Stomach (tissue), 19 donors: ENCODE measurements at regions of chr6 and their contacts with region 1.

Region 1: GRCh38 chr6:159789377-159790148 is at the start of gene TCP1:
- DNase-seq: peak; percentile 100
- H3K4me3 ChIP-seq: peak within 1 kb of the TSS; percentile 89 to 93 (median 93)
- H3K27ac ChIP-seq: peak within 1 kb of the TSS; percentile 96 to 99 (median 98)
- H3K4me1 ChIP-seq: peaks cover 37 to 71% (median 59%) of the 10 kb centered on the region in 4 donors
- H3K27me3 ChIP-seq: no peaks in the 10 kb centered on the region
- CTCF ChIP-seq: no peak
- EP300 ChIP-seq: no peak
- POLR2A ChIP-seq: peak in 2 of 4 donors; percentile 94 to 95
- total RNA-seq, gene TCP1: 52.7 to 199 (median 127) TPM

Region 2: DNA sequence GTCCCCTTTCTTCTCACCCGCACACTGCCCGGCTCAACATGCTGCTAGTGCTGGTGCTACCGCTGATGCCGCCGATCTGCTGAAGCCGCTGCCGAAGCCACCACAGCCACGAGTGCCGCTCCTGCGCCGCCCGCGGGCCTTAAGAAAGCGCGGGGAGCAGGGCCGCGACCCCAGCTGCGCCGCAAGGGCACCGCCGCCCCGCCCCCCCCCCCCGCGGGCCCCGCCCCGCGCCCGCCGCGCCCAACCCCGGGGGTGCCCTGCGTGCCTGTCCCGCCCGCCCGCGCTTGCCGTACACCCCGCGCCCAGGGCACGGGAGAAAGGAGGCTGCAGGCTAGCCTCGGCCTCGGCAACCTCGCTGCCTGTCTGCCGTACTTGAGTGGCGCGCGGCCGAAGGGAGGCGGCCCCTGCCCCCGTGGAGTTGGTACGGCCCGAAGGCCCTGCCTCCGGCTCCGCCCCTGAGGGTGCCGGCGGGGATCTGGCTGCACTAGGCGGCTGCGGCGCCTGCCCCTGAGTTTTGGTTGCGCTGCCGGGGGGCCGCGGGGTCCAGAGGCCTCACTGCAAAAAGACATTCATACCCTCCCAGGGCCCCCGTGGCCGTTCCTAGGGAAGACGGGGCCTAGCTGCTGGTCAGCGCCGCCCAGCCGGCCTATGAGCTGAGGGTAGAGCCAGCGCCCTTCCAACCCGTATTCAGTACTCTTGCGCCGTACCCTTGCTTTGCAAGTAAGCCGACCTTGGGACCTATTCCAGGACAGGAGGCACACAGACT is 96.3 kb before region 1 on chr6 and contains the start of gene SOD2:
- intact Hi-C with region 1: loop called (anchors 10 kb)
- DNase-seq: peak; percentile 89 to 94
- H3K4me3 ChIP-seq: peak within 1 kb of the TSS; percentile 78 to 98 (median 93)
- H3K27ac ChIP-seq: peak within 1 kb of the TSS; percentile 95 to 99 (median 97)
- H3K4me1 ChIP-seq: peaks cover 31 to 55% (median 46%) of the 10 kb centered on the region in 4 donors
- H3K27me3 ChIP-seq: no peaks in the 10 kb centered on the region
- CTCF ChIP-seq: no peak
- EP300 ChIP-seq: no peak
- POLR2A ChIP-seq: peak in 2 of 4 donors; percentile 43 to 55
- total RNA-seq, gene SOD2: 27.2 to 187 (median 147) TPM